OCI-LY7 (cell line): ENCODE measurements at regions of chr10 and their contacts with region 1.

Region 1: DNA sequence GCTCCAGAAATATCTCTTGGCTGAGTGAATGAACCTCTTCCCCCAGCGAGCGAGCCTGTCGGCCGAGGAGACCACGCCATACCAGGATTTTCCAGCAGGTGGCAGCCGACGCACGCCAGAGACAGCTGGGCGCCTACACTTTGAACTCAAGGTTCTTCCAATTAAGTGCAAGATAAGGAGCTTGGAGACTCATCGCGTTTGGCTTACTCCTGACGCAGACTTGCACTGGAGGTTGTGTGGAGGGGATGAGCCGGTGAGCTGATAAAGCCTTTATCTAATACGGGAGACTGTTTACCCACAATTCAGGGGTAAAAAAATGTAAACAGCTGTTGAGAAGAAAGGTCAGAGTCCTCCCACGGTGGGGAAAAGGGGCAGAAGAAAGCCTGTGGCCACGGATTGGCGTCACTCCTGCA is 45.9 kb upstream of the EMX2 start:
- DNase-seq: peak; percentile 62
- H3K4me3 ChIP-seq: no peak overlapping the region
- H3K27ac ChIP-seq: no peak overlapping the region
- H3K4me1 ChIP-seq: no peaks in the 10 kb centered on the region
- CTCF ChIP-seq: peak; percentile 92

Region 2: GRCh38 chr10:117518246-117518645 is 21.6 kb after region 1 on chr10:
- CTCF ChIA-PET with region 1: no interaction called
- POLR2A ChIA-PET with region 1: no interaction called
- intact Hi-C with region 1: no loop called
- DNase-seq: no peak
- H3K4me3 ChIP-seq: no peak overlapping the region
- H3K27ac ChIP-seq: no peak overlapping the region
- H3K4me1 ChIP-seq: no peaks in the 10 kb centered on the region
- CTCF ChIP-seq: no peak

Region 3: GRCh38 chr10:117656434-117657367 is 160.1 kb after region 1 on chr10:
- CTCF ChIA-PET with region 1: no interaction called
- POLR2A ChIA-PET with region 1: no interaction called
- intact Hi-C with region 1: no loop called
- DNase-seq: no peak
- H3K4me3 ChIP-seq: no peak overlapping the region
- H3K27ac ChIP-seq: no peak overlapping the region
- H3K4me1 ChIP-seq: no peaks in the 10 kb centered on the region
- CTCF ChIP-seq: no peak

Region 4: DNA sequence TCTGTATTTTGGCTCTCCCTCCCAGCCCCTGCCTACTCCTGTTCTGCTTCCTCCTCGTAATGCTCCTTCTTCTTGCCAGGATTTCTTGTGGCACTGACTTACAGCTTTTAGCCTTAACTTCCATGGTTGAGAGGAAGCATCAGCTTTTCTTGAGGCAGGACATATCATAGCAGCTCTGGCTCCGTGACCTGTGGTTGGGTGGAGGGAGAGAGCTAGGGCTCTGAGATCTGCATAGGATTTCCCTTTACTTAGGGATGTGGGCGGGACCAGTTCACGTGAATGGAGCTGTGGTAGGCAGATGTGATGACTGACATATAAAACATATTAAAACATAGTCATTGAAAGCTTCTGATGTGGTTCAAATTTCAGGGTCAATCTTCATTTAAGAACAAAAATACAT is 560.7 kb after region 1 on chr10:
- CTCF ChIA-PET with region 1: no interaction called
- POLR2A ChIA-PET with region 1: interaction called, 11 read pairs
- intact Hi-C with region 1: no loop called
- DNase-seq: no peak
- H3K4me3 ChIP-seq: no peak overlapping the region
- H3K27ac ChIP-seq: no peak overlapping the region
- H3K4me1 ChIP-seq: no peaks in the 10 kb centered on the region
- CTCF ChIP-seq: no peak

Region 5: DNA sequence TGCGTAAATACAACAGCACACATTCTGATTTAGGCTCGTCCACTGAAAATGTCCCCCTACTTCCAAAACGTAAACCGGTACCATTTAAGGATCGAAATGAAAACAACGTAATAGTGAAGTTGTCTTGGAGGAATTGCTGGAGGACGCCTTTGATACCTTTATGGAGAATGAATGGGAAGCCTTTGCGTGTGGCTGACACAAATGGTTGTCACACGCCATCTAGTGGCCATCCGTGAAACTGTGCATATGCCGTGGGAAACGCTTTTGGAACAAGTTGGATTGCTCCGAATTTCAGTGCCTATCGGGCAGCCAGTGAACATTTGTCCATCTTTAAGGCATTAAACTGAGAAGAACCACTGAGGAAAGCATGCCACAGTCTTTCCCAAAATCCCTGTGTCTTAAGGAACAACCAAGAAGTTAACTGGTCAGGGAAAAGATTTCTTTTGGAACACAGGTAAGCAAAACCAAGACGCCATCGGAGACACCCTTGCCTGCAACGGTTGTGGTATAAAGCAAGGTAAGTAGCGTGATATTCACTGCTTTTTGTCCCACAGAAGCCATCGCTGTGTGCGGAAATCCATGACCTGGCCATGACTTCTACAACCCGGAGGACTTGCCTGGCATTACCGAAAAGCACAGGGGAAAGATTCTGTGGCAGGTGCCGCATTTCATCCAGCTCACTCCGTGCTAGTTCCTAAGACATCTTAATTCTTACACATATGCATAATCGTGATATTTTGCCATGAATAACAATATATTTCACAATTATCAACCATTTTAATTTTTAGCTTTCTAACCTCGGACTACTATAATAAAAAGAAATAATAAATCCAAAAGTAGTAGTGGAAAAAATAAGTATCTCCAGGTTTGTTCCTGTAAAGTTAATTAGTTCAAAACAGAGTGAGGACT is 744.9 kb after region 1 on chr10:
- CTCF ChIA-PET with region 1: interaction called, 3 read pairs
- POLR2A ChIA-PET with region 1: no interaction called
- intact Hi-C with region 1: loop called (anchors 1 kb)
- DNase-seq: peak; percentile 60
- H3K4me3 ChIP-seq: no peak overlapping the region
- H3K27ac ChIP-seq: no peak overlapping the region
- H3K4me1 ChIP-seq: no peaks in the 10 kb centered on the region
- CTCF ChIP-seq: peak; percentile 94

Region 6: GRCh38 chr10:118423800-118424479 is 927.3 kb after region 1 on chr10:
- CTCF ChIA-PET with region 1: no interaction called
- POLR2A ChIA-PET with region 1: no interaction called
- intact Hi-C with region 1: loop called (anchors 10 kb)
- DNase-seq: peak; percentile 63
- H3K4me3 ChIP-seq: no peak overlapping the region
- H3K27ac ChIP-seq: no peak overlapping the region
- H3K4me1 ChIP-seq: no peaks in the 10 kb centered on the region
- CTCF ChIP-seq: peak; percentile 82

Region 7: GRCh38 chr10:118459726-118460193 is 963.1 kb after region 1 on chr10:
- CTCF ChIA-PET with region 1: no interaction called
- POLR2A ChIA-PET with region 1: interaction called, 3 read pairs
- intact Hi-C with region 1: loop called (anchors 2 kb)
- DNase-seq: peak; percentile 62
- H3K4me3 ChIP-seq: no peak overlapping the region
- H3K27ac ChIP-seq: no peak overlapping the region
- H3K4me1 ChIP-seq: no peaks in the 10 kb centered on the region
- CTCF ChIP-seq: peak; percentile 91